Activated T-helper 1 cell treated with anti-CD3 and anti-CD28 coated beads, Interleukin-12 subunit alpha, Interleukin-12 subunit beta, Interleukin-2, Interleukin-4 antibody, amounts not matched to agents 30 ng/mL and 10 ng/mL and 1 ng/mL, durations not matched to agents 14 hours and 24 hours and 36 hours (primary cell): ENCODE measurements at regions of chr9 and their contacts with region 1.

Region 1: DNA sequence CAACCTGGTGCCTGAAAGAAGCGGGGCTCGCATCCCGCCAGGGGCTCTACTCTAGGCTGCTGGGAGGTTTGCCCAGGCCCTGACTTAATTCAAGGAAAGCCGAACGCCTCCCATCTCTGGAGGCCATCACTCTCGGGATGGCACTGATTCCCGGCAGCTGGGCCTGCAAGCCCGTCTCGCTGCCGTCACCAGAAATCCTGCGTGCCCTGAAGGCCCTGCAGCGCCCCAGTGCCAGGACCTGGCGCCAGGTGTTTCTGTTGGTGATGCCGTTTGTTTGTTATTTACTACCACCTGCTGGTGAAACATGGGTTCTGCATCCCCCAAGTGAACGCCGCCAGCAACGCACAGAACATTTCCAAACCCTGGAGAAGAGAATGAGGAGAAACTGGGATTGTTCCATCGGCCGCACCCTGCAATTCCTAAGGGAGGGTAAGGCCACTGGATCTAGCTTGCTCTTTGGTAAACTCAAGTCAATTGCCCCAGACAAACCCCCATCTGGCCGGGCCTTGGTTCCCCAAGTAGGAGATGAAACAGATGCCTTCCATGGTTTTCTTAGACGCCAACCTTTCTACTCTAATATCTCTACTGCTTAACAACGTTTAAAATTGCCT is 77.9 kb downstream of the AK8 start:
- DNase-seq: peak; percentile 46
- H3K4me3 Mint-ChIP-seq: no peak overlapping the region
- H3K27ac Mint-ChIP-seq: no peak overlapping the region
- H3K4me1 Mint-ChIP-seq: peaks cover 12% of the 10 kb centered on the region
- H3K27me3 Mint-ChIP-seq: peaks cover 23% of the 10 kb centered on the region

Region 2: GRCh38 chr9:132412089-132412488 is 388.1 kb before region 1 on chr9:
- intact Hi-C with region 1: loop called (anchors 1 kb)
- DNase-seq: peak; percentile 14
- H3K4me3 Mint-ChIP-seq: no peak overlapping the region
- H3K27ac Mint-ChIP-seq: no peak overlapping the region
- H3K4me1 Mint-ChIP-seq: peaks cover 24% of the 10 kb centered on the region
- H3K27me3 Mint-ChIP-seq: peaks cover 60% of the 10 kb centered on the region

Region 3: DNA sequence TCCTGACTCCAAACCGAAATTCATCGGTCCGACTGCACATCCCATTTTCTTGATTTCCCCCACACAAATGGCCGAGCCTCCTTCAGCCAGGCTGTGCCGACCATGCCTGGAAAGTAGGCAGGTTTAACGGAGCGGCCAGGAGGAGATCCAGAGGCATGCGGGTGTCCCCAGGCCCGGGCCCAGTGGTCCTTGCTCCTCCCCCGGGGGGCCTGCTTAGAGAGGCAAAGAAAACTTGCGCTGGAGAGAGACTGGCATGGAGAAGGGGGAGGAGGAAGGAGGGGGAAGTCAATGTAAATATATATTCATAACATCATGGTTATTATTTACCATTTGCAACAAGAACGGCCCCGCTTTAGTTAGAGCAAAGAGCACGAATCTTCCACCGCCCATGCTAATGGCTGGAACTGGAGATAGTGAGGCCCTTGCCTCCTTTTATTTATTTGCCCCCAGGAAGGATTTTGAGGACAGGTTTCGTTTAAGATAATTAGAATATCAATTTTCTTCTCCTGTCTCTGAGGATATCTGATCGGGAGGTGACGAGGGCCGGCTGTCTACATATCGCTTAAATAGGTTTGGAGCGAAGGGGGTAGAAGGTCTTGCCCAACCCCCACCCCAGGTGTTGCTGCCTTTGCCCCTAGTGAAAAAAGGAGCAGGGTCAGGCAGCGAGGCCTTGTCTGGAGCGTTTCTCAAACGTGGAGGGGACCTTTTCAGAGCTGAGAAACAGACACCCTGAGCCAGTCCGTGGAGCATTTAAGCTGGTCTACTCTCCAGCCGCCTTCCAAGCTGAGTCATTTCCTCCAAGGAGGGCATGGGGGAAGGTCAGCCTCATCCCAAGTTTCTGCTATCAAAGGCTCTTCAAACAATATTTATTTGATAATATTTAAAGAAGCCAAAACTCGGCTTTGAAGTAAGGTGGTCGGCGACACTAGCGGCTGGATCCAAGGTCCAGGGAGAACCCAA is 215.3 kb before region 1 on chr9:
- intact Hi-C with region 1: loop called (anchors 5 kb)
- DNase-seq: no peak
- H3K4me3 Mint-ChIP-seq: no peak overlapping the region
- H3K27ac Mint-ChIP-seq: no peak overlapping the region
- H3K4me1 Mint-ChIP-seq: peaks cover 8% of the 10 kb centered on the region
- H3K27me3 Mint-ChIP-seq: peaks cover 72% of the 10 kb centered on the region

Region 4: DNA sequence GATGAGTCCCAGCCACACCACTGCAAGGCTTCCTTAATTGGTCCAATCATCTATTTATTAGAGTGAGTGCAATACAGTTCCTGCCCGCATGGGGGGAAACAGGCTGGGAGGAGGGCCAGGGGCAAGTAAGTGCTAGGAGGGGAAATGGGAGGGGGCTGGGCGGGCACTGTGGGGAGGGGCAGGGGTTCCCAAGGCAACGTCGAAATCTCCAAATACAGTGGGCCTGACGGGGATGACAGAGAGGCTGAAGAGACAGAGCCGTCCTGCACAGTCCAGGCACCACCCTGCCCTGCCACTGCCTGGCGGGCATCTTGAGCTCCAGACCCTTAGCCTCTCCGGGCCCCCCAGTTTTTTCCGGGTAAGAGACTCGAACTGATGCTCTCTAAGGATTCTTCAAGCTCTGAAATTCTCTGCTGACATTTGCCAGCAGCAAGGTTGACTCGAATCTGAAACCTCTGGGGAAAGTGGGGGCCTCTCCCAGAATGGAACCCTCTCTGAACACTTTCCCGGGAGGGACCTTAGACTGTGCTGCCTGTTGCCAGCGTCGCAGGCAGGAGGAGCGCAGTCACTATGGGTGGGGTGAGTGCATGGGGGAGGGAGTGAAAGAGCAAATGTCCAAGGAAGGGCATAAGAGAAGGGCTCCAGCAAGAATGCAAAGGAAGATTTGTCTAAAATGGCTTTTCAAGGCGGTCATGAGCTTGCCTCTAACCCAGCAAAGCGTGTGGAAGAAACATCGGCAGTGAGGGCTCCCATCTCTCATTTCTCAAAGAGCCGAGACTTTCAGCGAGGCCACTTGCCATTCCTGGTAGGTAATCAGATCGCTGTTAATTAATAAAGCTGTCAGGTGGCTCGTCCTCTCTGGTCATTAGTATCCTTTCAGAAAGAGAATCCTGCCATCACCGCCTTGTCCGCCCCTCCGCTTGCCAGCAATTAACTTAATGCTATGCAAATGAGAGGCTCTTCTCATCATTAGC is 30.9 kb before region 1 on chr9:
- intact Hi-C with region 1: loop called (anchors 2 kb)
- DNase-seq: peak; percentile 35
- H3K4me3 Mint-ChIP-seq: peak overlapping the region; percentile 93
- H3K27ac Mint-ChIP-seq: peak overlapping the region; percentile 97
- H3K4me1 Mint-ChIP-seq: peaks cover 18% of the 10 kb centered on the region
- H3K27me3 Mint-ChIP-seq: peaks cover 13% of the 10 kb centered on the region

Region 5: DNA sequence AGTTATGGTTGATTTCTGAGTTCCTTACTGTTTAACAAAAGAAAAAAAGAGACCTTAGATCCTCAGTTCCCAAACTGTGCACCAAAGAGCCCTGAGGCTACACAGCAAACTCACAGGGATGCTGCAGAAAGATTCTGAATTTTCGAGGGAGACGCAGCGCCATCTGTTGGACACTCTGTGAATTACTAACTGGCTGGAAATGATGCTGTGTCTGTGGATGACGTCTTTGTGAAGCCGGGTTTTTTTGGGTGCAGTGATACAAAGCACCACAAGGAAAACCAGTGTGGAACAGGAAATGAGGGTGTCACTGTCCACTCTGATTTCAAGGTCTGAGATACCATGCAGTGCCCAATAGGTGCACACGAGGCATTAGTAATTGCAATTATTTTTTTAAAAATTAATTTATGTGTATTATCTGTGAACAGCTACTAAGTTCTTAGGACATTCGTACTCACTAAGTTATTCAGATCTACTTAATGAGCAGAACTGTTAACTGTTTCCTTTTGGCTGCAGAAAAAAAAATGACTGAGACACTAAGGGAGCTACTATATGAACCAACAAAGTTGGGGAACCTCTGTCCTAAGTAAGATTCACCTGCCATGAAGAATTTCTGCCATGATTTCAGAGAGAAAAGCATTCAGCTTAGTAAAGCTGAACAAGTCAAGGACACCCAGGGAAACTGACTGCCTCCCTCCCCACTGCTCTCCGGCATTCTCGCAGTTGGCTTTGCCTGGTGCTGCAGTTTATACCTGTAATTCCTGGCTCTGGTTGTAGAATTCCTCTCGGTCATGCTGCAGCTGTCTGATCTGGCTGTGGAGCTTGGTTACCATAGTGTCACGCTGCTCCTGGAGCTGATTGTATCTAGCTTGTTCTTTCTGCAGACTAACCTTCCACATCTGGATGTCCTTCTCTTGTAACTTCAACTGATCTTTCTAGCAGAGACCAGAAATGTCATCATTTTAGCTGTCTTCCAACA is 102.0 kb after region 1 on chr9:
- intact Hi-C with region 1: loop called (anchors 5 kb)
- DNase-seq: peak; percentile 72
- H3K4me3 Mint-ChIP-seq: no peak overlapping the region
- H3K27ac Mint-ChIP-seq: no peak overlapping the region
- H3K4me1 Mint-ChIP-seq: peaks cover 8% of the 10 kb centered on the region
- H3K27me3 Mint-ChIP-seq: no peaks in the 10 kb centered on the region